IMR-90 (cell line): ENCODE measurements at regions of chr4 and their contacts with region 1.

Region 1: GRCh38 chr4:4677556-4678522 is 136.0 kb upstream of the STX18 start:
- DNase-seq: peak; percentile 59
- ATAC-seq: peak; percentile 90
- H3K4me3 ChIP-seq: peak overlapping the region; percentile 23; the same call in 1 of the 2 replicates
- H3K27ac ChIP-seq: no peak overlapping the region
- H3K4me1 ChIP-seq: no peaks in the 10 kb centered on the region; the same call in 1 of the 2 replicates
- H3K27me3 ChIP-seq: peaks cover 9% of the 10 kb centered on the region
- CTCF ChIP-seq: peak; percentile 64
- POLR2A ChIP-seq: no peak
- RAD21 ChIP-seq: peak; percentile 69

Region 2: GRCh38 chr4:3765271-3766040 is 912.4 kb before region 1 on chr4:
- CTCF ChIA-PET with region 1: no interaction called
- POLR2A ChIA-PET with region 1: no interaction called
- dilution Hi-C with region 1: no loop called
- in situ Hi-C with region 1: no loop called
- intact Hi-C with region 1: no loop called
- DNase-seq: peak; percentile 42
- ATAC-seq: peak; percentile 87
- H3K4me3 ChIP-seq: peak overlapping the region; percentile 18; the same call in 1 of the 2 replicates
- H3K27ac ChIP-seq: no peak overlapping the region
- H3K4me1 ChIP-seq: peaks cover 2% of the 10 kb centered on the region; the same call in 1 of the 2 replicates
- H3K27me3 ChIP-seq: peaks cover 58% of the 10 kb centered on the region
- CTCF ChIP-seq: 0 out of 2 replicates have a peak, but pooled peaks have one; percentile 23
- POLR2A ChIP-seq: no peak
- RAD21 ChIP-seq: no peak

Region 3: DNA sequence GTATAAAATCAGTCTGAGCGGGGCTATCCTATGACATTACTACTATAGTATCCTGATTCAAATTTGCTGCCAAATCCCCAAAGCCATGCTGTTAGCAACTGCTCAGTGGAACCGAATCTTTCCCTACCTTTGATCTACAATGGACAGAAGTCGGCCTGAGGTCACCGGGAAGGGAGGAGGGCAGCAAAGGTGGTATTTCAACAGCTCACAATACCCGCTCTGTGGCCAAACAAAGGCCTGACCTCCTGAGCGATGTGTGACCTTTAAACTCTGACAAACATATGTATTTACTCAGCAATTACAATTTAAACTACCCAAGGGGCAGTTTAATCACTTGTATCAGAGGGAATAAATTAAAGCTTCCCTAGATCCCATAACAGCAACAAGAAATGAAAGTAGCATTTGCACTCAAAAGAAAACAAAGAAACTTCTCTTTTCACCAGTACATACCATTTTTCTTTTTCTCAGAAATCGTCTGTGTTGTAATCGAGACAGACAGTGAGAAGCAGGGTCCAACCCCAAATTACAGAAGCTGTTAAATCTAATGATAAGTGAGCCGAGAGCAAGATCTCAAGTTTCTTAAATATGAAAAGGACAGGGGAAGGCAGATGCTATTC is 418.2 kb before region 1 on chr4:
- CTCF ChIA-PET with region 1: no interaction called
- POLR2A ChIA-PET with region 1: no interaction called
- dilution Hi-C with region 1: no loop called
- in situ Hi-C with region 1: no loop called
- intact Hi-C with region 1: no loop called
- DNase-seq: no peak
- ATAC-seq: no peak
- H3K4me3 ChIP-seq: no peak overlapping the region
- H3K27ac ChIP-seq: no peak overlapping the region
- H3K4me1 ChIP-seq: peaks cover 1% of the 10 kb centered on the region; the same call in 1 of the 2 replicates
- H3K27me3 ChIP-seq: peaks cover 18% of the 10 kb centered on the region
- CTCF ChIP-seq: no peak
- POLR2A ChIP-seq: no peak
- RAD21 ChIP-seq: no peak

Region 4: GRCh38 chr4:4488405-4489404 is 189.1 kb before region 1 on chr4:
- CTCF ChIA-PET with region 1: no interaction called
- POLR2A ChIA-PET with region 1: no interaction called
- dilution Hi-C with region 1: no loop called
- in situ Hi-C with region 1: no loop called
- intact Hi-C with region 1: loop called (anchors 2 kb)
- DNase-seq: peak; percentile 83
- ATAC-seq: peak; percentile 92
- H3K4me3 ChIP-seq: no peak overlapping the region
- H3K27ac ChIP-seq: no peak overlapping the region
- H3K4me1 ChIP-seq: 0 out of 2 replicates have a peak, but pooled peaks cover 2% of the 10 kb centered on the region
- H3K27me3 ChIP-seq: no peaks in the 10 kb centered on the region
- CTCF ChIP-seq: peak; percentile 91
- POLR2A ChIP-seq: no peak
- RAD21 ChIP-seq: peak; percentile 93

Region 5: DNA sequence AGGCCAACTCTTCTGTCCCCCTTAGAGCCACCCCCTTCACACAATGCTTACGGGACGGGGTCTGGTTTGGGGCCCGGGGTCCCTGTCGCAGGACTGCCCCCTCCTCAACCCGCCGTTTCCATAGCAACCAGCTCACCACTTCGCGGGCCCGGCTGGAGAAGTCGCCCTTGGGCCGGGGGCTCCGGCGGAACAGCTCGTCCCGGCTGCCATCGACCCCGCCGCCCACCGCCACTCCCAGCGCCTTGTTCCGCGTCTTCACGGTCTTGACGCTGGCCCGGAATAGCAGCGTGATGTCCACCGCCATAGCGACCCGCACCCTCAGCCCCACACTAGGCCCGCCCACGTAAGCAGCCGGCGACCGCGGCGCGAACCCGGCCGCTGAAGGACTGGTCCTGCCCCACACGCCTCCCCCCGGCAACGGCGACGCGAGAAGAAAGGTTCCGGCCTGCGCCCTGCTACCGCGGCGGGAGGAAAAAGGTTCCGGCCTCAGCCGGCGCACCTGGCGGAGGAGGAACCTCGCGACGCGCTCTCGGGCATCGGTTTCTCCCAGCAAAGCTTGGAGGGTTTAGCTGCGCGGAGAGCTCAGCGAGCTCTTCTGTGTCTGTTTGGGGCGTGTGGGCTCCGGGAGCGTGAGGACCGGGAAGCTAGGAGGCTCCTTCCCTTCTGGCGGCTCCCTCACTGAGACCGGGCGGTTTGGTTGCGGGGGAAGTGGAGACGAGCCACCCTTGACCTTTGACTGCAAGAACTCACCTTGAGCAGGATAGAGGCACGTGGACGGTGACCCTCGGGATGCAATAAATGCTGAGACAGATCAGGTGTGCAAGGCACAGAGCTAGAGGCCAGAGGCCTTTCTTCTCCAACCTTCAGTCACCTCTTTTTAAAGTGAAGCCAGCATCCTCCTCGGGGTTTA is 135.9 kb before region 1 on chr4 and contains the start of gene STX18:
- CTCF ChIA-PET with region 1: interaction called, 3 read pairs
- POLR2A ChIA-PET with region 1: no interaction called
- dilution Hi-C with region 1: no loop called
- in situ Hi-C with region 1: no loop called
- intact Hi-C with region 1: loop called (anchors 5 kb)
- DNase-seq: peak; percentile 83
- ATAC-seq: peak; percentile 99
- H3K4me3 ChIP-seq: peak within 1 kb of the TSS; percentile 66
- H3K27ac ChIP-seq: peak within 1 kb of the TSS; percentile 74
- H3K4me1 ChIP-seq: no peaks in the 10 kb centered on the region
- H3K27me3 ChIP-seq: no peaks in the 10 kb centered on the region
- CTCF ChIP-seq: no peak
- POLR2A ChIP-seq: peak; percentile 84
- RAD21 ChIP-seq: peak; percentile 38
- total RNA-seq, gene STX18: 20.1 and 26.9 TPM in 2 replicates

Region 6: DNA sequence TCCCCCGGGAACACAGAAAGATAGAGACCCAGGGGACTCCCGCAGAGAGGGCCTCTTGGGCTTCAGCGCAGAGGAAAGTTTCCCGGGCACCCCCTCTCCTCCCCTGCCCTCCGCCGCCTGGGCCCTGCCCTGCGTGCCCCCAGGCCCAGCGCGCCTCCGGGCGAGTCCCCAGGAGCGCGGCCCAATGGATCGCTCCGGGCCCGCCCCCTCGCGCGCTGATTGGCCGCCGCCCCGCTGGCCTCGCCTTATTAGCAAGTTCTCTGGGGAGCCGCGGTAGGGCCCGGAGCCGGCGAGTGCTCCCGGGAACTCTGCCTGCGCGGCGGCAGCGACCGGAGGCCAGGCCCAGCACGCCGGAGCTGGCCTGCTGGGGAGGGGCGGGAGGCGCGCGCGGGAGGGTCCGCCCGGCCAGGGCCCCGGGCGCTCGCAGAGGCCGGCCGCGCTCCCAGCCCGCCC is 181.6 kb after region 1 on chr4 and contains the start of gene MSX1:
- CTCF ChIA-PET with region 1: no interaction called
- POLR2A ChIA-PET with region 1: no interaction called
- dilution Hi-C with region 1: no loop called
- in situ Hi-C with region 1: no loop called
- intact Hi-C with region 1: loop called (anchors 5 kb)
- DNase-seq: peak; percentile 75
- ATAC-seq: peak; percentile 95
- H3K4me3 ChIP-seq: peak within 1 kb of the TSS; percentile 66
- H3K27ac ChIP-seq: no peak within 1 kb of the TSS; the same call in 1 of the 2 replicates
- H3K4me1 ChIP-seq: no peaks in the 10 kb centered on the region; the same call in 1 of the 2 replicates
- H3K27me3 ChIP-seq: peaks cover 37% of the 10 kb centered on the region
- CTCF ChIP-seq: no peak
- POLR2A ChIP-seq: peak; percentile 94
- RAD21 ChIP-seq: no peak
- total RNA-seq, gene MSX1: 1.1 TPM in 2 replicates

Region 7: GRCh38 chr4:4867375-4868039 is 189.7 kb after region 1 on chr4:
- CTCF ChIA-PET with region 1: no interaction called
- POLR2A ChIA-PET with region 1: no interaction called
- dilution Hi-C with region 1: no loop called
- in situ Hi-C with region 1: loop called (anchors 5 kb)
- intact Hi-C with region 1: loop called (anchors 5 kb)
- DNase-seq: no peak
- ATAC-seq: no peak
- H3K4me3 ChIP-seq: no peak overlapping the region
- H3K27ac ChIP-seq: no peak overlapping the region
- H3K4me1 ChIP-seq: no peaks in the 10 kb centered on the region
- H3K27me3 ChIP-seq: peaks cover 83% of the 10 kb centered on the region
- CTCF ChIP-seq: no peak
- POLR2A ChIP-seq: no peak
- RAD21 ChIP-seq: no peak

Region 8: DNA sequence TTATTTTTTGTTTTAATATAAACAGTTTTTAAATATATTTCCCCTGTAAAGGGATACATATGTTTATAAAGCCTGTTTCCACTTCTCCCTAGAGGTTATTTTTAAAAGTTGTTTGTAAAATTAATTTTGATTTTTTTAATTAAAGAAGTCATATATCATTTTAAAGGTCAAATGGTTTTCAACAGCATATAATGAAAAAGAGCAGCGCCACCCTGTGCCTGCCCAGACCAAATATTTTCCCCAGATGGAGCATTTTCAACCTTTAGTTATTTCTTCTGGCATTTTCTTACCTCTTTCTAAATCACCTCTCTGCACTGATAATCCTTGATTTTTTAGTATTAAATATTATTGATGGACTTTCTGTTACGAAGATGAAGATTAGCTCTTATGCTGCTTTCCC is 202.7 kb after region 1 on chr4:
- CTCF ChIA-PET with region 1: no interaction called
- POLR2A ChIA-PET with region 1: no interaction called
- dilution Hi-C with region 1: no loop called
- in situ Hi-C with region 1: no loop called
- intact Hi-C with region 1: loop called (anchors 2 kb)
- DNase-seq: no peak
- ATAC-seq: no peak
- H3K4me3 ChIP-seq: no peak overlapping the region
- H3K27ac ChIP-seq: no peak overlapping the region
- H3K4me1 ChIP-seq: no peaks in the 10 kb centered on the region
- H3K27me3 ChIP-seq: peaks cover 35% of the 10 kb centered on the region
- CTCF ChIP-seq: peak; percentile 52
- POLR2A ChIP-seq: no peak
- RAD21 ChIP-seq: peak; percentile 49

Region 9: DNA sequence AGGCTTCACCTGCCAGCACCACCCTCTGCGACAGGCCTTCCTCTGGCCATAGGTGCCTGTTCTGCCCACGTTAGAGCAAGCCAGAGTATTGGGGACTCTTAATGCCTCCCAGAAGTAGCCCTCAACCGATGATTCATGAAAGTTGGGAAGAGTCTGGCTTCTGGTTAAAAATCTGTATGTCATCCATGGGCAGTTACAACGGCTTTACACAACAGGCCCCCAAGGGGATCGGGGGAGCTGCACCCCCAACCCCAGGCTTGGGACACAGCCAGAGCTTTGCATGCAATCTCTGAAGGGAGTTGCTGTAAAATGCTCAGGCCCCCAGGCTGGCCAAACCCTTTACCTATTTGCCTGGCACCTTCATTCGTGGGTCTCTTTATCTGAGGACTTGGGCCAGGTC is 346.8 kb after region 1 on chr4:
- CTCF ChIA-PET with region 1: no interaction called
- POLR2A ChIA-PET with region 1: no interaction called
- dilution Hi-C with region 1: no loop called
- in situ Hi-C with region 1: no loop called
- intact Hi-C with region 1: no loop called
- DNase-seq: no peak
- ATAC-seq: no peak
- H3K4me3 ChIP-seq: no peak overlapping the region
- H3K27ac ChIP-seq: no peak overlapping the region
- H3K4me1 ChIP-seq: peaks cover 5% of the 10 kb centered on the region; the same call in 1 of the 2 replicates
- H3K27me3 ChIP-seq: peaks cover 39% of the 10 kb centered on the region
- CTCF ChIP-seq: no peak
- POLR2A ChIP-seq: no peak
- RAD21 ChIP-seq: no peak

Region 10: DNA sequence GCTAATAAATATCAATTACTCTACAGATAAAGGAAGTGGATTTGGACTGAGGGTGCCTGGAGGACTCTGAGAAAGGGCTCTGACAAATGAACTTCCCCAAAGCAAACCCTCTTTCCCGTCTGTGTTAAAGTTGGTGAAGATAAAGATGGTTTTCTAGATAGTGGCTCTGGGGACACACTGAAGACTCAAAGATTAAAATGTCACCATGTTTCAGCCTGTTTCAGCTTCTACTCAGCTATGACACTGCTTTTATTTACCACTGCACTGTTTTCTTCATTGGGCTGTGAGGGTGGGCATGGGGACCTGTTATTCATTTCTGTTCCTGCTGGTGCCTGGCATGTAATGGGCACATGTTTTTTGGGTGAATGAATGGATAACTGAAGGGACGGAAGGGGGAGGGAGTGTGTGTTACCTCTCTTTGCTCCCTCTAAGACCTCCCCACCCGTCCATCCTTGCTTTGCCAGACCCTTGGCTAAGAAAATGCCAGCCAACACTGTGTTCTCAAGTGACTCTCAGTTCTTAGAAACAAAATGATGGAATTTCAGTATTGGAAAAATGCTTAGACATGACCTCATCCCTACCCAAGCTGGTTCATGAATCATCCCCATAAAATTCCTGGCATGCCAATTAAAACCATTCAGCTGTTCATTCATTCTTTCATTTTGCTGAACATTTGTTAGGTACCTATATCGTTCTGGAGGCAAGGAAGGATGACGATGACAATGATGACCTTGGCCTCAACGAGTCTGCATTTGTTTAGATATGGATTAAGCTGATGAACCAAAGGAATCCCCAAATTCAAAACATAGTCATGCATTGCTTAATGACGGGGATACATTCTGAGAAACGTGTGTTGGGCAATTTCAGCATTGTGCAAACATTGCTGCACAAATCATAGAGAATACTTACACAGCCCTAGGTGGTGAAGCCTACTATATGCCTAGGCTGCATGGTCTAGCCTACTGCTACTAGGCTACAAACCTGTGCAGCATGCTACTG is 360.0 kb after region 1 on chr4:
- CTCF ChIA-PET with region 1: no interaction called
- POLR2A ChIA-PET with region 1: no interaction called
- dilution Hi-C with region 1: no loop called
- in situ Hi-C with region 1: no loop called
- intact Hi-C with region 1: loop called (anchors 10 kb)
- DNase-seq: peak; percentile 99
- ATAC-seq: peak; percentile 84
- H3K4me3 ChIP-seq: no peak overlapping the region
- H3K27ac ChIP-seq: peak overlapping the region; percentile 96
- H3K4me1 ChIP-seq: peaks cover 35% of the 10 kb centered on the region
- H3K27me3 ChIP-seq: no peaks in the 10 kb centered on the region
- CTCF ChIP-seq: no peak
- POLR2A ChIP-seq: no peak
- RAD21 ChIP-seq: no peak